ENCODE measurements at regions of chr17 and their contacts with region 1.

Region 1: GRCh38 chr17:45172454-45173286 is 11.0 kb downstream of the HEXIM2 start:
- DNase-seq: peak; percentile 98
- H3K4me3 Mint-ChIP-seq: peak overlapping the region; percentile 78
- H3K27ac Mint-ChIP-seq: peak overlapping the region; percentile 99
- H3K4me1 Mint-ChIP-seq: peaks cover 26% of the 10 kb centered on the region
- H3K27me3 Mint-ChIP-seq: no peaks in the 10 kb centered on the region
- CTCF ChIP-seq: peak; percentile 27

Region 2: DNA sequence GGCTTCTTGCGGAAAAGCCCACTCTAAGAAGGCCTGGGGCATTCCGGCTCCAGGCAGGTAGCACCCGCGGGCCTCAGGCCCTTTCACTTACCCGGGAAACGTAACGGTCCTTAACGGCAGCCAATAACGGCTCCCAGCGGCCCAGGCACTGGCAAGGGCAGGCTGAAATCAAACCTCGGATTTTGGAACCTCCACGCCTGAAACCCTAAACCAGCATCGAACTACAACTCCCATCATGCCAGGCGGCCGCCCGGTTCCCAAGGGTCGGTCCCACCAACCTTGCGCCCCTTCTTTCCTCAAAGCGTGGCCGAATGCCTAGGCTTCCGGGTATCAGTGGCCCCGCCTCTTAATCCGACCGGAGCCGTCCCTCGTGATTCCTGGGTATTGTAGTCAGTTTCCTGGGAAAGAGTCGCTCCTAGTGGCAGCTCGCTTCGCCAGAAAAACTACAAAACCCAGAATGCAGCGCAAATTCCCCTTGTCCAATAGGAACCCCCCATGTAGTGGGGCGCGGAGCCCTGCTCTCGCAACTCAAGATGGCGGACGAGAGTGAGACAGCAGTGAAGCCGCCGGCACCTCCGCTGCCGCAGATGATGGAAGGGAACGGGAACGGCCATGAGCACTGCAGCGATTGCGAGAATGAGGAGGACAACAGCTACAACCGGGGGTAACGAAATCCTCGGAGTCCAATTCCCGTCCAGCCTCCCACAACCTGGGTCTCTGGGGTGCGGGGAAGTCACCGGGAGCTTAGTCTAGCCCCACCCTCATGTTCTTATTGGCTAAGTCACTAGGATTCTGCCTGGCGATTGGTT is 111.7 kb before region 1 on chr17 and contains the start of gene NMT1:
- CTCF ChIA-PET with region 1: interaction called, 3 read pairs
- POLR2A ChIA-PET with region 1: interaction called, 15 read pairs
- intact Hi-C with region 1: no loop called
- DNase-seq: peak; percentile 100
- H3K4me3 Mint-ChIP-seq: peak within 1 kb of the TSS; percentile 84
- H3K27ac Mint-ChIP-seq: peak within 1 kb of the TSS; percentile 94
- H3K4me1 Mint-ChIP-seq: peaks cover 5% of the 10 kb centered on the region
- H3K27me3 Mint-ChIP-seq: no peaks in the 10 kb centered on the region
- CTCF ChIP-seq: no peak
- total RNA-seq, gene NMT1: 85.3 and 89.7 TPM in 2 replicates

Region 3: DNA sequence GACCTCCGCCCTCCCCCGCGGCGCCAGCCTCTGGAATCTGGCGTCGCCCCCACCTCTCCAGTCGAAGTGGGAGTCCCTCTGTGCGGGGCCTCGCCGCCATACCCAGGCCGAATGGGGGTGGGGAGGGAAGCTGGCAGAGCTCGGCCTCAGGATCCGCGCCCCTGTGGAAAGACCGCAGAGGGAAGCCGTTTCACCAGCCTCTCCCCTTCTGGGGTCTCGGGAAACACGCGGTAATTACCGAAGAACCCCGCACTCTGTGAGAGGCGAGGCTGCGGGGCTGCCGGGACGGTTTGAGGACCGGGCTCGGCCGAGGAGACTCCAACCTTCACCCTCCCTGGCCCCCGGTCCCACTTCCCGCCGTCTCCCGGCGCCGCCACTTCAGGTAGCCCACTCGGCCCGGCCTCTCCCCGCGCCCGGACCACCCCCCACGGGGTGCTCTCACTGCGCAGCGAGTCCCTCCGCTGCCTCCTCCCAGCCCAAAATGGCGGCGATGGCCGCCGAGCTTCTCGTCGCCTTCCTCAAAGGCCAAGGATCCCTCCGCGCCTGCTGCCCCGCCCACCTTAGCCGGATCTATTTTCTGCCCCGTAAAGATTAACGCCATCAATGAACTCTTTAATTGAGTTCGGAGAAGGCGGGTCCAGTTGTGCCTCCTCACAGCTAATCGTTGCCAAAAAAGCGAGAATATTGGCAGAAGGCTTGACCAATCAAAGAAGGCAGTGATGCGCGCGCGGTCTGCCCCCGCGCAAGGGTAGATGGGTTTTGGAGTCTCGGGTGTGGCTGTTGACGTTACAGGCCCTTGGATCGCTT is 11.4 kb before region 1 on chr17:
- CTCF ChIA-PET with region 1: interaction called, 31 read pairs
- POLR2A ChIA-PET with region 1: interaction called, 1,083 read pairs
- intact Hi-C with region 1: loop called (anchors 1 kb)
- DNase-seq: peak; percentile 100
- H3K4me3 Mint-ChIP-seq: peak overlapping the region; percentile 98
- H3K27ac Mint-ChIP-seq: peak overlapping the region; percentile 99
- H3K4me1 Mint-ChIP-seq: peaks cover 18% of the 10 kb centered on the region
- H3K27me3 Mint-ChIP-seq: no peaks in the 10 kb centered on the region
- CTCF ChIP-seq: no peak

Region 4: GRCh38 chr17:45197555-45198334 is 25.1 kb after region 1 on chr17:
- CTCF ChIA-PET with region 1: interaction called, 67 read pairs
- POLR2A ChIA-PET with region 1: interaction called, 79 read pairs
- intact Hi-C with region 1: loop called (anchors 1 kb)
- DNase-seq: peak; percentile 91
- H3K4me3 Mint-ChIP-seq: no peak overlapping the region
- H3K27ac Mint-ChIP-seq: peak overlapping the region; percentile 19
- H3K4me1 Mint-ChIP-seq: peaks cover 10% of the 10 kb centered on the region
- H3K27me3 Mint-ChIP-seq: no peaks in the 10 kb centered on the region
- CTCF ChIP-seq: peak; percentile 99